ENCODE measurements at regions of chr14 and their contacts with region 1.

Region 1: DNA sequence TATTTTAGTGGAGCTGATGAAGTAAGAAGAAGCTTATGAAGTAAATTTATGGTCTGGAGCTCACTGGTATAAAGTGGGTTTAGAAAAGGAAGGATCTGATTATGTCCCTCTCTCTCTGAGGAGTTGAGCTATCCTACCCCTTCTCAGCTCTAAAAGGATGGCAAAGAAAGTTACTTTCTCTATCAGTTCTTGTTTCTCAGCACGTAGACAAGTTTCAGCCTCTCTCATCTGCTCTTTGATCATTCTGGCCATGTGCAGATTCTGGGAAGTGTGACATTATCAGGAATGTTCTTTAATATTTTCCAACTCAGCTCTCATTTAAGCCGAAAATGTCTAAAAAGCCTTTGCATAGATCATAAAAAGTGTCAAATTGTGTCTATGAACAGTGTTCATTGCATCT is 5.8 kb upstream of the EGLN3 start:
- DNase-seq: no peak
- ATAC-seq: no peak
- H3K4me3 ChIP-seq: no peak overlapping the region
- H3K27ac ChIP-seq: no peak overlapping the region
- H3K4me1 ChIP-seq: peaks cover 0 to 24% (median 4%) of the 10 kb centered on the region in 9 donors
- H3K27me3 ChIP-seq: peaks cover 0 to 18% (median 0%) of the 10 kb centered on the region in 7 donors
- CTCF ChIP-seq: no peak

Region 2: GRCh38 chr14:33578461-33579216 is 378.0 kb before region 1 on chr14:
- intact Hi-C with region 1: no loop called
- DNase-seq: no peak
- ATAC-seq: no peak
- H3K4me3 ChIP-seq: no peak overlapping the region
- H3K27ac ChIP-seq: no peak overlapping the region
- H3K4me1 ChIP-seq: no peaks in the 10 kb centered on the region
- H3K27me3 ChIP-seq: no peaks in the 10 kb centered on the region
- CTCF ChIP-seq: no peak

Region 3: GRCh38 chr14:33631456-33631855 is 325.2 kb before region 1 on chr14:
- intact Hi-C with region 1: no loop called
- DNase-seq: no peak
- ATAC-seq: no peak
- H3K4me3 ChIP-seq: no peak overlapping the region
- H3K27ac ChIP-seq: no peak overlapping the region
- H3K4me1 ChIP-seq: no peaks in the 10 kb centered on the region
- H3K27me3 ChIP-seq: no peaks in the 10 kb centered on the region
- CTCF ChIP-seq: no peak

Region 4: GRCh38 chr14:34023824-34024767 is 67.5 kb after region 1 on chr14:
- intact Hi-C with region 1: loop called in 2 of 10 experiments (anchors 2 to 10 kb)
- DNase-seq: no peak
- ATAC-seq: no peak
- H3K4me3 ChIP-seq: no peak overlapping the region
- H3K27ac ChIP-seq: no peak overlapping the region
- H3K4me1 ChIP-seq: peaks cover 0 to 11% (median 0%) of the 10 kb centered on the region in 9 donors
- H3K27me3 ChIP-seq: no peaks in the 10 kb centered on the region
- CTCF ChIP-seq: no peak

Region 5: DNA sequence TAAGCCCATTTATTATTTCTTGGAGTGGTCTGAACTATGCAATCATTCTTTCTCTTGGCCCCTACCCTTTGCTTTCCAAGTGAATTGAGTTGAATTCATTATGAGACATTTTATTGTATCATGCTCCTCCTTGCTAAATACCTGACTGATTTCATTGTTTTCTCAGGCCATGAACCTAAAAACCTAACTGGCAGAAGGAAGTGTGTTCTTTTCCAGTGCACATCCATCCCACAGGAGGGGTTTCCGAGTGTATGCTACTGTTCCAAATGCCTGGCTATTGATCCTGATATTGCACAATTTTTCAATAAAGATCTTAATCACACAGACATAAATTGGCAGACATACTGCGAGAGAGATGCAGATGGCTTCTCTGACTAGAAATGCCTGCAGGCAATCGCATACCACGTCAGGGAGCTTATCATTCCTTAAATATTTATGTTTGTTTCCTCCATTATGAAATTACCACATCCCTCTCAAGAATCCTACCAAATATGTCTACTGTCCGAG is 156.4 kb after region 1 on chr14:
- intact Hi-C with region 1: no loop called
- DNase-seq: no peak
- ATAC-seq: no peak
- H3K4me3 ChIP-seq: no peak overlapping the region
- H3K27ac ChIP-seq: no peak overlapping the region
- H3K4me1 ChIP-seq: no peaks in the 10 kb centered on the region
- H3K27me3 ChIP-seq: no peaks in the 10 kb centered on the region
- CTCF ChIP-seq: no peak